AG04450 (cell line): ENCODE measurements at regions of chr9 and their contacts with region 1.

Region 1: GRCh38 chr9:89576404-89576839 is 28.4 kb upstream of the GADD45G start:
- DNase-seq: no peak
- H3K4me3 ChIP-seq: no peak overlapping the region
- H3K27ac ChIP-seq: no peak overlapping the region
- H3K27me3 ChIP-seq: peaks cover 2% of the 10 kb centered on the region
- CTCF ChIP-seq: peak; percentile 66

Region 2: DNA sequence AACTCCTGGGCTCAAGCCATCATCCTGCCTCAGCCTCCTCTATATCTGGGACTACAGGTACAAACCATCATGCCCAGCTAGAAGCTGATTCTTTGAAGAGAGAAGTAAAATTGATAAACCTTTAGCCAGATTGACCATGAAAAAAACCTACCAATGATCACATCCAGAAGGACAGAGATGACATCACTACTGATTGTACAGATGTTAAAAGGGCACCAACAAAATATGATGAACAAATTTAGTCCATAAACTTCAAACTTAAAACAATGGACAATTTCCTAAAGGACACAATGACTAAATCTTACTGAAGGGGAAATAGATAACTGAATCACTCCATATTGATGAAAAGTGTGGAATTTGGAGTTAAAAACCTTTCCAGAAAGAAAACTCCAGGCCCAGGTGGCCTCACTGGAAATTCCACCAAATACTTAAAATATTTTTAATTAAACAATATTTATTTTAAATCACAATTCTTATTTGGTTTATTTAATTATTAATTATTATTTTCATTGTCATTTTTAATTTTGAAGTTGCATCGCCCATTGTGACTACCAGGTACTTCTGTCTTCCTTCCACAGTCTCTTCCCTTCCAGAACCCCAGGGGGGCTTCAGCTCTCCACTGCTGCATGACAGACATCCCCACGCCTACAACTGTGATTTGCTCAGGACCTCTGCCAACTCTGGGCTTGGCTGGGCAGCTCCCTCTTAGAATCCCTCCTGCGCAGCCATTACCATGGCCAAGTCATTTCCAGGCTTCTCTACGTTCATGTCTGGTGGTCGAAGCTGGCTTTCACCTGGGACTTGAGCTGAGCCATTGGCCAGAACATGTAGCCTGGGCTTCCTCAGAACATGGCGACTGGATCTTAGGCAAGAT is 11.8 kb after region 1 on chr9:
- CTCF ChIA-PET with region 1: interaction called, 41 read pairs
- POLR2A ChIA-PET with region 1: no interaction called
- DNase-seq: no peak
- H3K4me3 ChIP-seq: no peak overlapping the region
- H3K27ac ChIP-seq: no peak overlapping the region
- H3K27me3 ChIP-seq: peaks cover 4% of the 10 kb centered on the region
- CTCF ChIP-seq: no peak

Region 3: DNA sequence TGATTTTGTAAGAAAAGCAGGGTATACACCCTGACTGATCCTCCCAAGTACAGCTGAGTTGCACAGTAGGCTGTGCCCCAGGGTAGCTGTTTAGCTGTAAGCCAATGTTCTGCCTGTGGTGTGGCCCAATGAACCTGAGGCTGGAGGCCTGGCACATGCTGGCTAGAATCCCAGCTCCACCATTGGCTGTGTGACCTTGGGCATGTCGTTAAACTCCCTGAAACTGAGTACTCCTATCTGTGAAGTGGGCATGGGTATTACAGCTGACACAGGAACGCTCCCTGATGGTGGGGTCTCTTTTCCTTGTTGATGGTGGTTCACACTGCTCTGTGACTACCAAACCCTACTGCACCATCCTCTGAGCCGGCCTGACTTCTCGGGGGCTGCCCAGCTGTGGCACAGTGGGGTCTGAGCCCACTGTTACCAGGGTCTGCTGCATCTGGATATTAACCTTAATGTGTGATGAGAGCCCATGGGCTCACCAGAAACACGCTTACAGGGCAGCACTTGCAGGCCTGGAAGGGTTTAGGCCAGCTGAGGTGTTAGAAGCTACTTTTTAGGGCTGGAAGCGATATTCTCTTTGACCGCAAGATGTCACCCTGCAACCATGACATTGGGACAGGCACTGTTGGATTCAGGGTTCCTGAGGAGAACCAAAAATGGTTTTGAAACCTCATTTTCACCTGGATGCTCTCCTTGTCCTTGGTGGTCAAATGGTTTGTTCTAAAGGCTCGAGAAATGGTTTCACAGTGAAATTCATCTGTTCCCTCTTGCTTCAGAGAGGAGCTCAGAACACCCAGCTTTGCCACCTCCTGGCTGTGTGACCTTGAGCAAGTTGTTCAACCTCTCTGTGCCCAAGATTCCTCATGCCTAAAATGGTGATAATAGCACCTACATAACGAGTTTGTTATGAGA is 21.5 kb after region 1 on chr9:
- CTCF ChIA-PET with region 1: interaction called, 41 read pairs
- POLR2A ChIA-PET with region 1: no interaction called
- DNase-seq: peak; percentile 15
- H3K4me3 ChIP-seq: no peak overlapping the region
- H3K27ac ChIP-seq: no peak overlapping the region
- H3K27me3 ChIP-seq: peaks cover 34% of the 10 kb centered on the region
- CTCF ChIP-seq: peak; percentile 76